Activated CD4-positive, alpha-beta T cell treated with anti-CD3 and anti-CD28 coated beads, Interleukin-2, amount 10 ng/mL, durations not matched to agents 24 days and 14 days (primary cell): ENCODE measurements at regions of chr10 and their contacts with region 1.

Region 1: GRCh38 chr10:67764012-67764822 is 68.2 kb upstream of the CTNNA3 start:
- DNase-seq: peak; percentile 99
- H3K4me3 Mint-ChIP-seq: peak overlapping the region; percentile 85
- H3K27ac Mint-ChIP-seq: peak overlapping the region; percentile 92
- H3K4me1 Mint-ChIP-seq: peaks cover 23% of the 10 kb centered on the region
- H3K27me3 Mint-ChIP-seq: peaks cover 8% of the 10 kb centered on the region

Region 2: GRCh38 chr10:67306588-67307205 is 457.5 kb before region 1 on chr10:
- intact Hi-C with region 1: no loop called
- DNase-seq: no peak
- H3K4me3 Mint-ChIP-seq: no peak overlapping the region
- H3K27ac Mint-ChIP-seq: no peak overlapping the region
- H3K4me1 Mint-ChIP-seq: no peaks in the 10 kb centered on the region
- H3K27me3 Mint-ChIP-seq: no peaks in the 10 kb centered on the region

Region 3: GRCh38 chr10:67612577-67613537 is 151.4 kb before region 1 on chr10:
- intact Hi-C with region 1: loop called (anchors 1 kb)
- DNase-seq: peak; percentile 91
- H3K4me3 Mint-ChIP-seq: peak overlapping the region; percentile 69
- H3K27ac Mint-ChIP-seq: peak overlapping the region; percentile 65
- H3K4me1 Mint-ChIP-seq: peaks cover 25% of the 10 kb centered on the region
- H3K27me3 Mint-ChIP-seq: peaks cover 19% of the 10 kb centered on the region

Region 4: DNA sequence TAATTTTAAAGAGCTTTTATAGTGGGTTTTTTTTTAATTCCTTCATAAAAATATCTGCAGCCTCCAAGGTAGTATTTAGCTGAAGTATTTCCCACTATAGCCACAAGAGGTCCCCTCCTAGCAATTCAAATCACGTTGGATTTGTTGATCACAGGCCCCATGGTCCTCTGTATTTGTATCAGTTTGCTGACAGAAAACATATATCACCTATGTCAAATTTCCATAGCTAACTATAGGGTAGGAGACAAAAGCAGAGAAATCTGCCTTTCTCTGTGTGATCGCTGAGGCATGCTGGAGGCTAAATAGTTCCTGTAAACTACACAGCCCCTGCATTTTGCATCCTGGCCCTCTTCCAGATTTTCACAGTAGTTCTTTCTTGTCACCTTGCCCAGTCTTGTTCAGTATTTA is 66.5 kb before region 1 on chr10:
- intact Hi-C with region 1: loop called (anchors 5 kb)
- DNase-seq: peak; percentile 80
- H3K4me3 Mint-ChIP-seq: no peak overlapping the region
- H3K27ac Mint-ChIP-seq: no peak overlapping the region
- H3K4me1 Mint-ChIP-seq: peaks cover 2% of the 10 kb centered on the region
- H3K27me3 Mint-ChIP-seq: peaks cover 39% of the 10 kb centered on the region

Region 5: GRCh38 chr10:67884313-67884841 is 120.2 kb after region 1 on chr10 and contains the start of gene SIRT1:
- intact Hi-C with region 1: loop called (anchors 1 kb)
- DNase-seq: peak; percentile 98
- H3K4me3 Mint-ChIP-seq: peak within 1 kb of the TSS; percentile 97
- H3K27ac Mint-ChIP-seq: peak within 1 kb of the TSS; percentile 90
- H3K4me1 Mint-ChIP-seq: peaks cover 23% of the 10 kb centered on the region
- H3K27me3 Mint-ChIP-seq: peaks cover 3% of the 10 kb centered on the region
- total RNA-seq, gene SIRT1: 27.1 and 27.8 TPM in 2 replicates